MCF 10A (cell line): ENCODE measurements at regions of chr11 and their contacts with region 1.

Region 1: DNA sequence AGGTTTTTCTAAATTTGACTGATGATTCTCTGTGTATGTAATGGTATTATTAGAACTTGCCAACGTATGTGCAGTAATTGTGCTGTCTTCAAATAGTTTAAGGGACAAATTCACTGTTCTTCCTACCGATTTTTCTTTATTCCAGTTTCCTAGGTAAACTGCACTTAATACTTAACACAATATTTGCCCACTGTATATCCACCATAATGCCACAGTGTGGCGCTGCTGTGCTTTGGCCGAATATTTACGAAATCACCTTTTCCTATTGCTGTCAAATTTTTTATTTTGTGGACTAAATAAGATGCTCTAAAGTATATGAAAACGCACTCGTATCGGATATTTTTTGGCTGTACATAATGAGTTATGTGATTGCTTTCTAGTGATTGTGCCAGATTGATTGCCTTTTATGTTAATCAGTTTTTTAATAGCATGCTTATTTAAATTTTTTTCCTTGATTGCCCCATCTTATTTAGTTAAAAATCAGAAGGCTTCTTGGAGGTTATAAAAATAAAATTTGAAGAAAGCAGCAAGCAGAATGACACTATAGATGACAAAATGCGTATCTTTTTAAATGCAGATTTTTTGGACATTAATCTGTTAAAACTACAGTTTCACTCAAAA is 10.5 kb downstream of the AASDHPPT start:
- DNase-seq: peak; percentile 72
- H3K4me3 Mint-ChIP-seq: peak overlapping the region; percentile 32
- H3K27ac Mint-ChIP-seq: no peak overlapping the region
- H3K4me1 Mint-ChIP-seq: peaks cover 48% of the 10 kb centered on the region
- H3K27me3 Mint-ChIP-seq: no peaks in the 10 kb centered on the region
- CTCF ChIP-seq: peak; percentile 80

Region 2: GRCh38 chr11:106076919-106077608 is 10.9 kb before region 1 on chr11 and contains the start of gene KBTBD3:
- CTCF ChIA-PET with region 1: interaction called, 3 read pairs
- POLR2A ChIA-PET with region 1: interaction called, 11 read pairs
- intact Hi-C with region 1: no loop called
- DNase-seq: peak; percentile 99
- H3K4me3 Mint-ChIP-seq: peak within 1 kb of the TSS; percentile 88
- H3K27ac Mint-ChIP-seq: peak within 1 kb of the TSS; percentile 97
- H3K4me1 Mint-ChIP-seq: peaks cover 33% of the 10 kb centered on the region
- H3K27me3 Mint-ChIP-seq: no peaks in the 10 kb centered on the region
- CTCF ChIP-seq: no peak
- total RNA-seq, gene KBTBD3: 2.9 and 5.1 TPM in 2 replicates

Region 3: DNA sequence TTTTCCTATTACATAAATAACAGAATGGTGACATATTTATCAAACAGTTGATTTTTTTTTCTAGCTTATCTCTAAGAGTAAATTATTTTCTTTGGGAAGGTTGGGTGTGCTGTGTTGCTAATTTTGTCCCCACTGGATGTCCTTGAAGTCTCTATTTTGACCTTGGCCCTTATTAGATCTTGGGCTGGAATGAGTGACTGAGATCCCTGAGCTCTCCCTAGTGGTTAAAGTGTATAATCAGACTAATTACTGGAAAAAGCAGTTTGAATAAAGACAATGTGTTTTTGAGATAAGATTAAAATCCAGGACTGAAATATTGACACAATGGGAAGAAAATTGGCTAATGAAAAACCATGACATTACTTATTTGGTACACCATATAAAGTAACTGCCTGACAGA is 45.6 kb after region 1 on chr11:
- CTCF ChIA-PET with region 1: interaction called, 10 read pairs
- POLR2A ChIA-PET with region 1: interaction called, 4 read pairs
- intact Hi-C with region 1: loop called (anchors 1 kb)
- DNase-seq: peak; percentile 18
- H3K4me3 Mint-ChIP-seq: no peak overlapping the region
- H3K27ac Mint-ChIP-seq: no peak overlapping the region
- H3K4me1 Mint-ChIP-seq: no peaks in the 10 kb centered on the region
- H3K27me3 Mint-ChIP-seq: peaks cover 11% of the 10 kb centered on the region
- CTCF ChIP-seq: peak; percentile 32

Region 4: DNA sequence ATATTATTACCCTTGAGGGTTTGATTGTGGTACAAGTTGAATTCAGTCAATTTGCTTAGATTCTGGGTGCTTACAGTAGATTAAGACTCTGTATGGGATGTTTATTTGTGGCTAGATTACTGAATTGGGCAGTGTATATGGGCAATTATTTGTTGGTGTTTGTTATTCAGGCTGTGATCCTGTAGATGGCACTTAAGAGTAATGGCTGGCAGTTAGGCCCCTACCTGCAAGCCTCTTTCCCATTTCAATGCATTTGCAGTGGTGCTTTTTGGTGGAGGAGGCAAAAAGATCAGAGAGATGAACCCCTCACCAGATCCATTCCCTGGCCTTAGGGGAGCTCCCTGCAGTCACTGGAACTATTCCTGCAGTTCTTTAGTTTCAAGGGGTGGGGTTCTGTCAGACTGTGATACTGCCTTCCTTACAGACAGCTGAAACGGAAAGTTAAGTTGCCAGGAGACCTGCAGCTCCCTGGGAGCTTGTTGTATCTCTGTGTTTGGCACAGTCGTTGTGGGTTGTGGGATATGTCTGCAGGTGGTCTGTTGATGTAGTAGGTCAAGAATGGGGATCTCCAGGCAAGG is 189.0 kb after region 1 on chr11:
- CTCF ChIA-PET with region 1: no interaction called
- POLR2A ChIA-PET with region 1: no interaction called
- intact Hi-C with region 1: loop called (anchors 10 kb)
- DNase-seq: peak; percentile 29
- H3K4me3 Mint-ChIP-seq: no peak overlapping the region
- H3K27ac Mint-ChIP-seq: no peak overlapping the region
- H3K4me1 Mint-ChIP-seq: peaks cover 23% of the 10 kb centered on the region
- H3K27me3 Mint-ChIP-seq: no peaks in the 10 kb centered on the region
- CTCF ChIP-seq: peak; percentile 40

Region 5: GRCh38 chr11:107043242-107044006 is 955.5 kb after region 1 on chr11:
- CTCF ChIA-PET with region 1: interaction called, 3 read pairs
- POLR2A ChIA-PET with region 1: no interaction called
- intact Hi-C with region 1: loop called (anchors 5 kb)
- DNase-seq: peak; percentile 56
- H3K4me3 Mint-ChIP-seq: no peak overlapping the region
- H3K27ac Mint-ChIP-seq: peak overlapping the region; percentile 64
- H3K4me1 Mint-ChIP-seq: peaks cover 15% of the 10 kb centered on the region
- H3K27me3 Mint-ChIP-seq: no peaks in the 10 kb centered on the region
- CTCF ChIP-seq: no peak